Activated B cell treated with CpG ODN at 0.5 μM for 24 hours (primary cell): ENCODE measurements at regions of chr11 and their contacts with region 1.

Region 1: DNA sequence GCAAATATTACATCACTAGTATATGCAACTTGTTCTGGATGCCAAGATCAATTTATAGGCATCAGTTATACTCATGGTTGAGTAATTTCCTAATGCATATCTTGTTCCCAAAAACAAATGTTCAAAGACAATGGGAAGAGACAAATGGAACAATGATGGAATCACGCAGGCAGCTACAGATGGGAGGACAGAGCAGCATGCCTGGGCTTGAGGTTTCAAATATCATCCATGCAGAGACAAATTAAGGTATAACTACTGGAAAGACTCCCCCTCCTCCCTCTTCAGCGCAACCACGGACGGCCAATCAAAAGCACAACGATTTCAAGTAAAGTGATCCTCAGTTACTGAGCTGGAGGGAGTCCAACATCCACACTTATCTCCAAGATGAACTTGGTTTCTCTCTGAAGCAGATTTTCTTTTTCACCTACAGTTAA is 106.8 kb downstream of the CCDC83 start:
- DNase-seq: no peak
- ATAC-seq: no peak
- H3K4me3 Mint-ChIP-seq: no peak overlapping the region
- H3K27ac Mint-ChIP-seq: no peak overlapping the region
- H3K4me1 Mint-ChIP-seq: no peaks in the 10 kb centered on the region
- H3K27me3 Mint-ChIP-seq: no peaks in the 10 kb centered on the region
- CTCF ChIP-seq: no peak

Region 2: GRCh38 chr11:85299258-85299942 is 662.5 kb before region 1 on chr11:
- CTCF ChIA-PET with region 1: no interaction called
- POLR2A ChIA-PET with region 1: no interaction called
- intact Hi-C with region 1: no loop called
- DNase-seq: no peak
- ATAC-seq: no peak
- H3K4me3 Mint-ChIP-seq: no peak overlapping the region
- H3K27ac Mint-ChIP-seq: no peak overlapping the region
- H3K4me1 Mint-ChIP-seq: peaks cover 7% of the 10 kb centered on the region
- H3K27me3 Mint-ChIP-seq: no peaks in the 10 kb centered on the region
- CTCF ChIP-seq: no peak

Region 3: DNA sequence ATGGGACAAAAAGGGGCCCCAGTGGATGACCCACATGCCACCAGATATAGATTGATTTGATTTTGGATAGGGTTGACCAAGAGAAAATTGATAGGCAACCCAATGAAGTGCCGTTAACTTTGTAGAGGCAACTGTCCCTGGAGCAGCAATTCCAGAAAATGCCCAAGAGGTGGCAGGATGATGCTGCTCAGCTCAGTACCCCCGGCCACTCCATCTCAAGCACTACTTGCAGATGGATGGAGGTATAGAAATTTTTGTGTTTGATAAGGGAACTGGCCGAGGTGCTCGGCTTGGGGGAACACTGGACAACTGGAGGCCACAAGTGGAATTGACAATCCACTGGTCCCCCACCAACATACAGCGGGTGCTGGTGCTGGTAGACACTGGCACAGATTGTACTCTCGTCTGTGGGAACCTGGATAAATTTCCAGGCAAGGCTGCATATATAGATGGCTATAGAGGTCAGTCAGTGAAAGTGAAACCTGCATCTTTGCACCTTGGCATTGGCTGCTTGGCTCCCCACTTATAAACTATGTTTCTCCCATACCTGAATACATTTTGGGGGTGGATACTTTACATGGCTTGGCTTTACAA is 20.5 kb before region 1 on chr11:
- CTCF ChIA-PET with region 1: no interaction called
- POLR2A ChIA-PET with region 1: no interaction called
- intact Hi-C with region 1: no loop called
- DNase-seq: no peak
- ATAC-seq: no peak
- H3K4me3 Mint-ChIP-seq: no peak overlapping the region
- H3K27ac Mint-ChIP-seq: no peak overlapping the region
- H3K4me1 Mint-ChIP-seq: no peaks in the 10 kb centered on the region
- H3K27me3 Mint-ChIP-seq: no peaks in the 10 kb centered on the region
- CTCF ChIP-seq: no peak

Region 4: DNA sequence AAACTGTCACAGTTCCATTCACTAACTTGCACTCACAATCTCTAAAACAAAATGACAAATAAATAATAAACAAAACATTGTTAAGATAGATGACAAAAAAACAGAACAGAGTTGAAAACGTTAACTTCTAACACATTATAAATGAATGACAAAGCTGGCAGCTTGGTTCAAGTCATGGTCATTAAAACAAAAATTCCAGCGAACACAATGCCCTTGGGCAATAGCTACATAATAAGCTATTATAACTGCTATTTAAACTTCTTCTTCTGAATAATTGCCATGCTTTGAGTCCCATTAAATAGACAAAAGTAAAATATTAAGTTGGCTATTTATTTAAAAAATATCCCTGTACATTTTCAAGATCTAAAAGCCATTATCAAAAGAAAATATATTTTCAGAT is 52.3 kb after region 1 on chr11:
- CTCF ChIA-PET with region 1: no interaction called
- POLR2A ChIA-PET with region 1: no interaction called
- intact Hi-C with region 1: loop called (anchors 5 kb)
- DNase-seq: no peak
- ATAC-seq: no peak
- H3K4me3 Mint-ChIP-seq: no peak overlapping the region
- H3K27ac Mint-ChIP-seq: no peak overlapping the region
- H3K4me1 Mint-ChIP-seq: peaks cover 12% of the 10 kb centered on the region
- H3K27me3 Mint-ChIP-seq: no peaks in the 10 kb centered on the region
- CTCF ChIP-seq: no peak